CD8-positive, alpha-beta T cell (primary cell): ENCODE measurements at regions of chr12 and their contacts with region 1.

Region 1: DNA sequence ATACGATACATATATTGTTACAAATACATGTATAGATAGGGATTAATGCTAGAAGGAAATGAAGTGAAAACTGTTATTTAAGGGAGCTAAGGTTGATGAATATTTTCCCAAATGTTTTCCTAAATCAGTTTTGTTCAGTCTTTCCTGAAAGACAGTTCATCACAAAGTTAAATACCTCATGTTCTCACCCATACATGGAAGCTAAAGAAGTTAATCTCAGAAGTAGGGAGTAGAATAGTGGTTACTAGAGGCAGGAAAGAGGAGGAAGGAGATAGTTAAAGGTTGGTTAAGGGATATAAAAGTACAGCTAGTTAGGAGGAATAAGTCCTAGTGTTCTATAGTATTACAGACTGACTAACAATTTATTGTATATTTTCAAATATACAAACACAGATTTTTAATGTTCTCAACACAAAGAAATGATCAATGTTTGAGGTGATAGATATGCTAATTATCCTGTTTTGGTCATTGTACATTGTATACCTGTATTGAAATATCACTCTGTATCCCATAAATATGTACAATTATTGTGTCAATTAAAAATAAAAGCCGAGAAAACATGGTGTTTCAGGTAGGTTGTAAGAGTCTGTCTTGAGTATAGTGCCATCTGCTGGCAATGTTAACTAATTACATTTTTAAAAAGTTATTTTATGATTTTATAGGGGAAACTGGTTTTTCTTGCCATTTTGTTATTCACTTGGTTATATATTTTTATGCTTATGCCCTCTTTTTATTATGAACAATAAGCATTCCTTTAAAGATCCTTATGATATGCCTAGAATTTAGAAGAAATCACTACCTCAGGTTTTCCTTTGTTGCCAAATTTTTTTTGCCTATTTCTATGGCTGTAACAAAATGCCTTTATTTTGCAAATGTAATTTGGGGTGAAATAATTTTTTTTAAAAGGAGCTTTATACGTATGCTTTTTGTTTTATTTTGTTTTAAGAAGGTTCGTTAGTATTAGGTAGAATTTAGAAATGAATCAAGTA is 26.9 kb downstream of the ZDHHC17 start:
- DNase-seq: peak in 2 of 9 experiments; percentile 41 to 58
- ATAC-seq: peak; percentile 52
- H3K4me3 ChIP-seq: no peak overlapping the region
- H3K4me3 Mint-ChIP-seq: no peak overlapping the region
- H3K27ac ChIP-seq: no peak overlapping the region
- H3K27ac Mint-ChIP-seq: peak overlapping the region; percentile 56
- H3K4me1 ChIP-seq: no peaks in the 10 kb centered on the region
- H3K4me1 Mint-ChIP-seq: peaks cover 34% of the 10 kb centered on the region
- H3K27me3 ChIP-seq: no peaks in the 10 kb centered on the region
- H3K27me3 Mint-ChIP-seq: no peaks in the 10 kb centered on the region
- CTCF ChIP-seq: peak; percentile 79

Region 2: DNA sequence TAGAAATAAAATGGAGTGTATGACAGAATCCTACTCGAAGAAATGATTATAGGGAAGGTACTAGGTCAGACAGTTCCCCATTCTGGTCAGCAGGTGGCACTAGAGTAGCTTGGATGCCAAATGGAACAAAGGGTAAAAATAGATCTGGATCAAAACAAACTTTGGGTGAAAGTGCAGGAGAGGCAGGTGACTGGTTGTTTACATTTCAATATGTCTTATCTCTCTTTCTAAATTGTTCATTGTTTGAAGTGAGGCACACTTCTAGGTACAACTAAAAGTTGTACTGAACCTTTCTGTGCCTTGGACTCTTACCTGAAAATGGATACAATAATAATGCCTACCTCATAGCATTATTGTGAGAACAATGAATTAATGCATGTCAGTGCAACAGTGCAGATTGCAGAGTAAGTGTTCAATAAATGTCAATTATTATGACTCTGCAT is 169.3 kb before region 1 on chr12:
- CTCF ChIA-PET with region 1: interaction called, 40 read pairs
- POLR2A ChIA-PET with region 1: interaction called, 4 read pairs
- intact Hi-C with region 1: loop called (anchors 1 kb)
- DNase-seq: peak; percentile 33 to 79 (median 72)
- ATAC-seq: peak; percentile 94
- H3K4me3 ChIP-seq: no peak overlapping the region
- H3K4me3 Mint-ChIP-seq: no peak overlapping the region
- H3K27ac ChIP-seq: no peak overlapping the region
- H3K27ac Mint-ChIP-seq: no peak overlapping the region
- H3K4me1 ChIP-seq: no peaks in the 10 kb centered on the region
- H3K4me1 Mint-ChIP-seq: peaks cover 3% of the 10 kb centered on the region
- H3K27me3 ChIP-seq: no peaks in the 10 kb centered on the region
- H3K27me3 Mint-ChIP-seq: no peaks in the 10 kb centered on the region
- CTCF ChIP-seq: peak; percentile 98

Region 3: DNA sequence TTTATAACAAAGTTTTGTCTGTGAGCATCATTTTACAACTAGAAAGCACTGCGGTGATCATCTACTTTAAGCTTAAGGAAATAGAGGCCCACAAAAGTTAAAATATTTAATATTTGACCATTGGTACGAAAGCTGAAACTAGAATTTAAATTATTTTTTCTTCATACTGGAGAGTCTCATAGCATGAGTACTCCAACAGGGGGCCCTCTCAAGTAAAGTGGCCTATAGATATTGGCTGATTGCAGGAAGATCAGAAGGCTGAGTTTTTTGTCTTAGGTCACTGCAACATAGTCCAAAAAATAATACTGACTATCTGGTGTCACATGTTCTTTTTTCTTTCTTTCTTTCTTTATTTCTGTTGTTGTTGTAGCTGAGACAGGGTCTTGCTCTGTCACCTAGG is 102.2 kb before region 1 on chr12:
- CTCF ChIA-PET with region 1: interaction called, 11 read pairs
- POLR2A ChIA-PET with region 1: interaction called, 3 read pairs
- intact Hi-C with region 1: loop called (anchors 1 to 2 kb)
- DNase-seq: peak in 2 of 9 experiments; percentile 11 to 22
- ATAC-seq: no peak
- H3K4me3 ChIP-seq: no peak overlapping the region
- H3K4me3 Mint-ChIP-seq: no peak overlapping the region
- H3K27ac ChIP-seq: no peak overlapping the region
- H3K27ac Mint-ChIP-seq: no peak overlapping the region
- H3K4me1 ChIP-seq: no peaks in the 10 kb centered on the region
- H3K4me1 Mint-ChIP-seq: peaks cover 5% of the 10 kb centered on the region
- H3K27me3 ChIP-seq: no peaks in the 10 kb centered on the region
- H3K27me3 Mint-ChIP-seq: no peaks in the 10 kb centered on the region
- CTCF ChIP-seq: peak; percentile 20

Region 4: DNA sequence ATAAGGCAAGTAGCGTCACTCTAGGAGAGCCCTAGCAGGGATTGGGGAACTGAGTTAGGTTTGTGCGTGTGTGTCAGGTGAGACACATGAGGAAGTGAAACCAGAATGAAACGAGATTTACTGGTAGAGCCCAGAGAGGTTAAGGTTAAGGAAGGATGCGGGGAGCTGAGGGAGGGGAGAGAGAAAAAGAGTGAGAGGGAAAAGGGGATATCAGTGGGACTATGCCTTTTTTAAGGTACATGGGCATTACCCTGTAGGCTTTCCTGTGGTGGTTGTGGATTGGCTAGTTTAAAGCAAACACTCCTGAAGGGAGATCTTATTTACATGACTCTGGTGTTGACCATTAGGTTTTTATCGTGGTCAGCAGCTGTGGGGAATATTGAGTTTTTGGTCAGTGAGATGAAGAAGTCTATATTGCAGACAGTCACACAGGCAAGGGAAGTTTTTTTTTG is 13.1 kb before region 1 on chr12:
- CTCF ChIA-PET with region 1: interaction called, 15 read pairs
- POLR2A ChIA-PET with region 1: no interaction called
- intact Hi-C with region 1: no loop called
- DNase-seq: peak in 1 of 9 experiments; percentile 35
- ATAC-seq: peak; percentile 36
- H3K4me3 ChIP-seq: no peak overlapping the region
- H3K4me3 Mint-ChIP-seq: no peak overlapping the region
- H3K27ac ChIP-seq: no peak overlapping the region
- H3K27ac Mint-ChIP-seq: peak overlapping the region; percentile 60
- H3K4me1 ChIP-seq: peaks cover 29% of the 10 kb centered on the region
- H3K4me1 Mint-ChIP-seq: peaks cover 80% of the 10 kb centered on the region
- H3K27me3 ChIP-seq: no peaks in the 10 kb centered on the region
- H3K27me3 Mint-ChIP-seq: no peaks in the 10 kb centered on the region
- CTCF ChIP-seq: no peak